CD4-positive, alpha-beta memory T cell (primary cell): ENCODE measurements at regions of chr11 and their contacts with region 1.

Region 1: GRCh38 chr11:133134314-133135173 is 397.8 kb downstream of the OPCML start:
- DNase-seq: peak in 3 of 5 donors; percentile 0 to 12 (median 9)
- H3K4me3 ChIP-seq: no peak overlapping the region
- H3K4me3 Mint-ChIP-seq: no peak overlapping the region
- H3K27ac ChIP-seq: no peak overlapping the region
- H3K27ac Mint-ChIP-seq: no peak overlapping the region
- H3K4me1 ChIP-seq: no peaks in the 10 kb centered on the region
- H3K4me1 Mint-ChIP-seq: peaks cover 0 to 1% (median 0%) of the 10 kb centered on the region in 4 donors
- H3K27me3 ChIP-seq: no peaks in the 10 kb centered on the region
- H3K27me3 Mint-ChIP-seq: peaks cover 1 to 5% of the 10 kb centered on the region in 2 donors

Region 2: DNA sequence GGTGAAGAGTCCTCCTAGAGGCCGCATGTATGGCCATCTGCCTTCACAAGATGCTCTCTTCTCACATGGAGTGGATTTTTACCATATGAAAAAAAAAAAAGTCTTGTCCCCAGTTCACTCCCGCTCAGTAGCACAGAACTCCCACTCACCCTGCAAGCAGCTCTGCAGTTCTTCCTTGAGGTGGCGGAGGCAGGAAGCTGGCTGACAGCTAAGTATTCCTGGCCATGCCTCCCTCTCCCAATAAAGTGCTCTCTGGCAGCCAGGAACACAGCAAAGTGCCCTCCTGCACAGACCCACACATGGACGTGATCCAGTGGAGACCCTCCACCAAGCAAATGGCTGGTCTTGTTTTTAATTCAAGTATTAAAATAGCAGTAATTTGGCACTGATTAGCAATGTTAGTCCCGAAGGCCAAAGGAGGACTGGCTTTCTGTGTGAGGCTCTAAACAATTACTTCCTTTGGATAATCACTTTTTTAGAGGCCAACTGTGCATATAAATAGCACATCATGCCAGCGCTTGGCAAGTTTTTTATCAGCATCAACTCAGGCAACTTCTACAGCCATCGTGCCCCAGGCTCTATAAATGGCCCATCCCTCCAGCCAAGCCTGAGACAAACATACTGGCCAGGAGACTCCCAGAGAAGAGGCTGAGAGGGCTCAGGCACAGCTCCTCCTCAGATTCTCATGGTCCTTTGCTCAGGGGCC is 15.8 kb before region 1 on chr11:
- CTCF ChIA-PET with region 1: interaction called, 10 read pairs
- POLR2A ChIA-PET with region 1: no interaction called
- intact Hi-C with region 1: no loop called
- DNase-seq: no peak
- H3K4me3 ChIP-seq: no peak overlapping the region
- H3K4me3 Mint-ChIP-seq: no peak overlapping the region
- H3K27ac ChIP-seq: no peak overlapping the region
- H3K27ac Mint-ChIP-seq: no peak overlapping the region
- H3K4me1 ChIP-seq: no peaks in the 10 kb centered on the region
- H3K4me1 Mint-ChIP-seq: no peaks in the 10 kb centered on the region
- H3K27me3 ChIP-seq: no peaks in the 10 kb centered on the region
- H3K27me3 Mint-ChIP-seq: peaks cover 0 to 7% of the 10 kb centered on the region in 2 donors

Region 3: DNA sequence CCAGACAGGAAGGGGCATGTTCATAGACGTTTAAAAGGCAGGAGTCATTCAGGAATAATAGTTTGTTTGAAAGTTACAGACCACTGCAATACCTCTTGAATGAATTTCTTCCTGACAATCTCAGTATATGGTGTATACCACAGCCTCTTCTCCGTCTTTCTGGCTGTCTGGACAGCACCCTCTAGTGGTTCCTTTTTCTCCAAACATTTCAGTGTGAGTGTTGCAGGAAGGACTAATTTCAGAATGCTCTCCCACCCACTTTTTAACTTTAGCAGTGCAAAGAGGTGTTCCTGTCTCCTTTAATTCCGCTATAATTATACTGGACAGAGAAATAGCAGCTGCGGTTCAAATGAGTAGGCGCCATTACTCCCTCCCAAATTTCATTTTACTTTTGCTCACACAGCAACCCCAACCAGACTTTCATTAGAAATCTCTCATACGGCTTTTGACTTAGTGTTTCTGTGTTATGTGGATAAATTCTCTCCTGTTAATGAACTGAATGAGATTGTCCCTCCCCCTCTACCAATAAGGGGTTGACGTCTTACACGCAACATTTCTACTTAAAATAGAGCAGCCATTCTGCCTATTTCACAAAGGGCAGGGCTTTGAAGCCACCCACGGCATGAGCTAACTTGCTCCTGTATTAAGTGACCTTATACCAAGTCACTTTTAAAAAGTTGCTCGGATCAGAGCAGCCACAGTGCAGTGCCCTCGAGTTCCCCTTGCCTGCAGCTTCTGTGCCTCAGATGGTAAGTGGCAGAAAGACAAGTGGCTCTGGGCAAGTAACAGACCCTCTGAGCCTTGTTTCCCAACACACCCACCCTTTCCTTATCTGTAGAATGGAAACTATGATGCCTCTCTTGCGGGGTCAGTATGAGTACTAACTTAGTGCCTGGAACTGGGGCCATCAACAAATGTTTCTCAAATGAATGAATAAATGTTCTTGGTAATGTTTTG is 29.2 kb after region 1 on chr11:
- CTCF ChIA-PET with region 1: no interaction called
- POLR2A ChIA-PET with region 1: no interaction called
- intact Hi-C with region 1: no loop called
- DNase-seq: no peak
- H3K4me3 ChIP-seq: no peak overlapping the region
- H3K4me3 Mint-ChIP-seq: no peak overlapping the region
- H3K27ac ChIP-seq: no peak overlapping the region
- H3K27ac Mint-ChIP-seq: no peak overlapping the region
- H3K4me1 ChIP-seq: no peaks in the 10 kb centered on the region
- H3K4me1 Mint-ChIP-seq: peaks cover 0 to 4% (median 0%) of the 10 kb centered on the region in 4 donors
- H3K27me3 ChIP-seq: no peaks in the 10 kb centered on the region
- H3K27me3 Mint-ChIP-seq: peaks cover 4% of the 10 kb centered on the region in 2 donors

Region 4: DNA sequence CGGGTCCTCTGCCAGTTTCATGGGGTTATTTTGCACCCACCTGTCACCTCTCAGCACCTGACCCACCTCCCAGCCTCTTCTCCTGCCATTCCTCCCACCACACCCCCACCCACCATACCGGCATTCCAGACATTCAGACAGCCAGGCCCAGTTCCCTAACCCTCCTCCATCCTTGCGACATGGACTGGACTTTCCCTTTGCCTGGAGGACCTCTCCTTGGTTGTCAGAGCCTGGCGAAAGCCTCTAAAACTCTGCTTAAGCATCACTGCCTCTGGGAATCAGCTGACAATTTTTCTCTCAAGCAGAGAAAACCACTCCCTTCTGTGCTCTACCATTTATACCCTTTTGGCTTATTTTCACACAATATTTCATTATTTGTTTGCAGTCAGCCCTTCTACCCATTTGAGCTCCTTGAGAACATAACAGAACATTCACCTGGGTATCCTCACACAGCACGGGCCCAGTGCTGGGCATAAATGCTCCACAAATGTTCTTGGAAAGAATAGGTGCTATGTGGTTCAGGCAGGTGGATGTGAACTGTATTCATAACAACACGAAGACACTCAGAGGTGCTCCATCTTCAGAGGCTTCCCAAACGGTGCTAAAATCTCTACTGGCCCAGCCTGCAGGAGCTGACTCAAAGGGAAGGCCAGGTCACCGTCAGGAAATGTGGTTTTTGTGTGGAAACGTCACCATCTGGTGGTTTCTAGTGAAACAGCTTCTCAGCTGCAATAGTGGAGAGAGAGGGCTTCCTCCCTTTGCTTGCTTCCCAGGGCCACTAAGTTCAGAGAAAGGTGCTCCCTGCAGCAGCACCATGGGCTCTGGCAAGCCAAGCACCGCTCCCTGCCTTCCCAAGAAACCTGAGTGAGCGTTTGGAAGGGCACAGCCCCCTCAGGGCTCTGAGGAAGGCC is 700.4 kb after region 1 on chr11:
- CTCF ChIA-PET with region 1: interaction called, 10 read pairs
- POLR2A ChIA-PET with region 1: no interaction called
- intact Hi-C with region 1: no loop called
- DNase-seq: peak in 3 of 5 donors; percentile 4 to 38 (median 28)
- H3K4me3 ChIP-seq: no peak overlapping the region
- H3K4me3 Mint-ChIP-seq: no peak overlapping the region
- H3K27ac ChIP-seq: no peak overlapping the region
- H3K27ac Mint-ChIP-seq: peak overlapping the region in 1 of 7 donors; percentile 10
- H3K4me1 ChIP-seq: no peaks in the 10 kb centered on the region
- H3K4me1 Mint-ChIP-seq: peaks cover 0 to 11% (median 5%) of the 10 kb centered on the region in 4 donors
- H3K27me3 ChIP-seq: no peaks in the 10 kb centered on the region
- H3K27me3 Mint-ChIP-seq: peaks cover 4 to 11% of the 10 kb centered on the region in 2 donors